Activated naive CD4-positive, alpha-beta T cell treated with anti-CD3 and anti-CD28 coated beads for 36 hours (primary cell): ENCODE measurements at regions of chr2 and their contacts with region 1.

Region 1: GRCh38 chr2:202634556-202635427 is at the start of gene FAM117B:
- DNase-seq: peak; percentile 99
- H3K4me3 Mint-ChIP-seq: peak within 1 kb of the TSS; percentile 96
- H3K27ac Mint-ChIP-seq: peak within 1 kb of the TSS; percentile 96
- H3K4me1 Mint-ChIP-seq: peaks cover 50% of the 10 kb centered on the region
- H3K27me3 Mint-ChIP-seq: no peaks in the 10 kb centered on the region
- total RNA-seq, gene FAM117B: 12.3 to 14.2 TPM

Region 2: GRCh38 chr2:201118121-201118960 is 1516.5 kb before region 1 on chr2:
- CTCF ChIA-PET with region 1: no interaction called
- intact Hi-C with region 1: loop called (anchors 5 kb)
- DNase-seq: peak; percentile 94
- H3K4me3 Mint-ChIP-seq: peak overlapping the region; percentile 96
- H3K27ac Mint-ChIP-seq: peak overlapping the region; percentile 100
- H3K4me1 Mint-ChIP-seq: peaks cover 41% of the 10 kb centered on the region
- H3K27me3 Mint-ChIP-seq: no peaks in the 10 kb centered on the region

Region 3: GRCh38 chr2:202588647-202589581 is 45.9 kb before region 1 on chr2:
- CTCF ChIA-PET with region 1: interaction called, 21 read pairs
- intact Hi-C with region 1: loop called (anchors 1 kb)
- DNase-seq: peak; percentile 81
- H3K4me3 Mint-ChIP-seq: no peak overlapping the region
- H3K27ac Mint-ChIP-seq: no peak overlapping the region
- H3K4me1 Mint-ChIP-seq: peaks cover 11% of the 10 kb centered on the region
- H3K27me3 Mint-ChIP-seq: no peaks in the 10 kb centered on the region

Region 4: GRCh38 chr2:202653890-202654289 is 19.1 kb after region 1 on chr2:
- CTCF ChIA-PET with region 1: no interaction called
- intact Hi-C with region 1: no loop called
- DNase-seq: no peak
- H3K4me3 Mint-ChIP-seq: no peak overlapping the region
- H3K27ac Mint-ChIP-seq: peak overlapping the region; percentile 69
- H3K4me1 Mint-ChIP-seq: peaks cover 82% of the 10 kb centered on the region
- H3K27me3 Mint-ChIP-seq: no peaks in the 10 kb centered on the region

Region 5: GRCh38 chr2:202750763-202751427 is 116.1 kb after region 1 on chr2:
- CTCF ChIA-PET with region 1: no interaction called
- intact Hi-C with region 1: loop called (anchors 2 kb)
- DNase-seq: no peak
- H3K4me3 Mint-ChIP-seq: peak overlapping the region; percentile 48
- H3K27ac Mint-ChIP-seq: peak overlapping the region; percentile 97
- H3K4me1 Mint-ChIP-seq: peaks cover 67% of the 10 kb centered on the region
- H3K27me3 Mint-ChIP-seq: no peaks in the 10 kb centered on the region

Region 6: DNA sequence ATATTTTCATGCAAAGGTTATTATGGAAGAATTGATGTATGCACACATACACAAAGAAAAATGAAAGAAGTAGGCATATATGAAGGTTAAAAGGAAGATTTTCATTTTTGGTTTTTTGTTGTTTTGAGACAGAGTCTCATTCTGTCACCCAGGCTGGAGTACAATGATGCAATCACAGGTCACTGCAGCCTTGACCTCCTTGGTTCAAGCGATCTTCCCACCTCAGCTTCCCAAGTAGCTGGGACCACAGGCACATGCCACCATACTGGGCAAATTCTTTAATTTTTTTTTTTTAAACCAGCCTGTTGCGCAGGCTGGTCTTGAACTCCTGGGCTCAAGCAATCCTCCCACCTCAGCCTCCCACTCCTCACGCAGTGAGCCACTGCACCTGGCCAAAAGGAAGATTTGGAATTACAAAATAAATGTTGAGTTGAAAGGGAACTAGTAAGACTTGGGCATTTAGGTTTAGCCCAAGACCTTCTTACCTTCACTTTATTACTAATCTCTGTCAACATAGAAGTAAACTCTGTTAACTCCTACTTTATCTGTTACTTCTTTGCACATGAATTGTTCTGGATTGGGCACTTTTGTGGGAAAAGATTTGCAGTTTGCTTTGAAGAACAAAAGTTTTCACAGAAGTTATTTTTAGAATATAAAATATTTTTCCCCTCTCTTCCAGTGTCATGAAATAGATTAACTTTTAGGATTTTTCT is 348.1 kb after region 1 on chr2:
- CTCF ChIA-PET with region 1: no interaction called
- intact Hi-C with region 1: no loop called
- DNase-seq: no peak
- H3K4me3 Mint-ChIP-seq: no peak overlapping the region
- H3K27ac Mint-ChIP-seq: no peak overlapping the region
- H3K4me1 Mint-ChIP-seq: no peaks in the 10 kb centered on the region
- H3K27me3 Mint-ChIP-seq: no peaks in the 10 kb centered on the region

Region 7: DNA sequence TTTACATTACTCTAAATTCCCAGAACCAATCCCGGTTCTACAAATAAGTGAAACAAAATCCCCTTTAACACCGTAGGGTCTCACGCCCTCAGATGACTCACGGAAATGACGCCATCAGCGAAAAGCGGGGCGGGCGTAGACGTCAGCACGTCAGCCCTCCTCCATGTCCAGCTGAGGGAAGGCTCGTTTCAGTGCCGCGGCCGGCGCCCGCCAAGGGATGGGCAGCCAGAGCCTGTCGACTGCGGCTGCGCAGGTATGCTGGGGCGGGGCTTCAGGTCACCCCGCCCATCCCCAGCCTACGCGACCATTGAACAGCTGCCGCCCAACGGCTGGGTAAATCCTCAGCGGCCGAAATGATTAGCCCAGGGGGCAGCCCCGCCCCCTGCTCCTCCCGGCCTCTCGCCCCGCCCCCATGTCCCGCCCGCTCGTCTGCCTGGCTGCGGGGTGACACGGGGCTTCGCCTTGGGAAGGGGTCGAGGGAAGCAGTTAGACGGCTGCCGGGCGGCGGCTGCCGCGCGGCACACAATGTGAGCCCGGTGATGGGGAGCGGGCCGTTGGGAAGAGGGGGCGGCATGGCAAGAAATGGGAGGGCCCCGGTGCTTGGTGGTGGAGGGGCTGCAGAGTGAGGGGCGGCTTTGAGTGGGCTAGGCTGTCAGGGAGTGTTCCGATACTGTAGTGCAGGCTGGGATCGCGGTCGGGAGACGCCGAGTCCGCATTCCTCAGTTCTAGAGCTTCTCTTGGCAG is 379.8 kb after region 1 on chr2 and contains the start of gene NBEAL1:
- CTCF ChIA-PET with region 1: no interaction called
- intact Hi-C with region 1: loop called (anchors 2 kb)
- DNase-seq: peak; percentile 97
- H3K4me3 Mint-ChIP-seq: peak within 1 kb of the TSS; percentile 95
- H3K27ac Mint-ChIP-seq: peak within 1 kb of the TSS; percentile 74
- H3K4me1 Mint-ChIP-seq: peaks cover 27% of the 10 kb centered on the region
- H3K27me3 Mint-ChIP-seq: no peaks in the 10 kb centered on the region
- total RNA-seq, gene NBEAL1: 7.9 to 8.3 TPM

Region 8: GRCh38 chr2:203730076-203730729 is 1095.4 kb after region 1 on chr2:
- CTCF ChIA-PET with region 1: no interaction called
- intact Hi-C with region 1: loop called (anchors 5 kb)
- DNase-seq: no peak
- H3K4me3 Mint-ChIP-seq: peak overlapping the region; percentile 17
- H3K27ac Mint-ChIP-seq: peak overlapping the region; percentile 97
- H3K4me1 Mint-ChIP-seq: peaks cover 91% of the 10 kb centered on the region
- H3K27me3 Mint-ChIP-seq: no peaks in the 10 kb centered on the region

Region 9: GRCh38 chr2:203934041-203934492 is 1299.3 kb after region 1 on chr2:
- CTCF ChIA-PET with region 1: no interaction called
- intact Hi-C with region 1: loop called (anchors 5 kb)
- DNase-seq: peak; percentile 78
- H3K4me3 Mint-ChIP-seq: peak overlapping the region; percentile 51
- H3K27ac Mint-ChIP-seq: peak overlapping the region; percentile 96
- H3K4me1 Mint-ChIP-seq: peaks cover 64% of the 10 kb centered on the region
- H3K27me3 Mint-ChIP-seq: no peaks in the 10 kb centered on the region